Caco-2 (cell line): ENCODE measurements at regions of chr2 and their contacts with region 1.

Region 1: GRCh38 chr2:227813562-227814353 is at the start of gene CCL20:
- DNase-seq: peak; percentile 36 to 50
- H3K4me3 ChIP-seq: peak within 1 kb of the TSS; percentile 15
- H3K4me3 Mint-ChIP-seq: peak within 1 kb of the TSS; percentile 72
- H3K27ac Mint-ChIP-seq: peak within 1 kb of the TSS; percentile 90
- H3K4me1 ChIP-seq: peaks cover 18% of the 10 kb centered on the region
- H3K4me1 Mint-ChIP-seq: peaks cover 13% of the 10 kb centered on the region
- H3K27me3 ChIP-seq: no peaks in the 10 kb centered on the region
- H3K27me3 Mint-ChIP-seq: no peaks in the 10 kb centered on the region
- CTCF ChIP-seq: no peak
- total RNA-seq, gene CCL20: 2.8 and 3.5 TPM in 2 replicates

Region 2: DNA sequence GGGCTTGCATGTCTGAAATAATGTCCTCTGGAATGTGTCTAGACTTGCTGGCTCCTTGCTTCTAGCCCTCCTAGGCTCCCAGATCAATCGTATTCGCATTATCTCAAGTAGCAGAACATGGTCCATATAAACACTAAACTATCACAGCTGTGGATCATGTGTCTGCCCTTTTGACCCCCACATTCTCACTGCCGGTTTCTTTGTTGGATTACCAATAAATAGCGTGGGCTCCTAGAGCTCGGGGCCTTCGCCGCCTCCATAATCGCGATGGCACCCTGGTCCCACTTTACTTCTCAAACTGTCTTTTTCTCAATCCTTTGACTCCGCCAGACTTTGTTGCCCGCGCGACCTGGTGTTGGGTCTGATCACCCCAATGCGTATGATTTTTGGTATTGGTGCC is 74.4 kb before region 1 on chr2:
- CTCF ChIA-PET with region 1: no interaction called
- POLR2A ChIA-PET with region 1: no interaction called
- intact Hi-C with region 1: no loop called
- DNase-seq: peak in 1 of 2 experiments; percentile 33
- H3K4me3 ChIP-seq: no peak overlapping the region
- H3K4me3 Mint-ChIP-seq: no peak overlapping the region
- H3K27ac Mint-ChIP-seq: no peak overlapping the region
- H3K4me1 ChIP-seq: no peaks in the 10 kb centered on the region
- H3K4me1 Mint-ChIP-seq: peaks cover 7% of the 10 kb centered on the region
- H3K27me3 ChIP-seq: no peaks in the 10 kb centered on the region
- H3K27me3 Mint-ChIP-seq: no peaks in the 10 kb centered on the region
- CTCF ChIP-seq: no peak

Region 3: GRCh38 chr2:227862227-227862740 is 48.5 kb after region 1 on chr2:
- CTCF ChIA-PET with region 1: no interaction called
- POLR2A ChIA-PET with region 1: no interaction called
- intact Hi-C with region 1: loop called (anchors 5 kb)
- DNase-seq: peak in 1 of 2 experiments; percentile 23
- H3K4me3 ChIP-seq: no peak overlapping the region
- H3K4me3 Mint-ChIP-seq: no peak overlapping the region
- H3K27ac Mint-ChIP-seq: no peak overlapping the region
- H3K4me1 ChIP-seq: peaks cover 16% of the 10 kb centered on the region
- H3K4me1 Mint-ChIP-seq: peaks cover 19% of the 10 kb centered on the region
- H3K27me3 ChIP-seq: no peaks in the 10 kb centered on the region
- H3K27me3 Mint-ChIP-seq: no peaks in the 10 kb centered on the region
- CTCF ChIP-seq: peak; percentile 30 to 47

Region 4: GRCh38 chr2:227871375-227871788 is 57.6 kb after region 1 on chr2 and contains the start of gene DAW1:
- CTCF ChIA-PET with region 1: no interaction called
- POLR2A ChIA-PET with region 1: interaction called, 3 read pairs
- intact Hi-C with region 1: loop called (anchors 2 kb)
- DNase-seq: peak; percentile 73 to 82
- H3K4me3 ChIP-seq: peak within 1 kb of the TSS; percentile 56
- H3K4me3 Mint-ChIP-seq: peak within 1 kb of the TSS; percentile 74
- H3K27ac Mint-ChIP-seq: peak within 1 kb of the TSS; percentile 88
- H3K4me1 ChIP-seq: peaks cover 37% of the 10 kb centered on the region
- H3K4me1 Mint-ChIP-seq: peaks cover 37% of the 10 kb centered on the region
- H3K27me3 ChIP-seq: no peaks in the 10 kb centered on the region
- H3K27me3 Mint-ChIP-seq: no peaks in the 10 kb centered on the region
- CTCF ChIP-seq: no peak
- total RNA-seq, gene DAW1: 5.4 and 6.6 TPM in 2 replicates